Sigmoid colon (tissue), 7 donors: ENCODE measurements at regions of chr3 and their contacts with region 1.

Region 1: DNA sequence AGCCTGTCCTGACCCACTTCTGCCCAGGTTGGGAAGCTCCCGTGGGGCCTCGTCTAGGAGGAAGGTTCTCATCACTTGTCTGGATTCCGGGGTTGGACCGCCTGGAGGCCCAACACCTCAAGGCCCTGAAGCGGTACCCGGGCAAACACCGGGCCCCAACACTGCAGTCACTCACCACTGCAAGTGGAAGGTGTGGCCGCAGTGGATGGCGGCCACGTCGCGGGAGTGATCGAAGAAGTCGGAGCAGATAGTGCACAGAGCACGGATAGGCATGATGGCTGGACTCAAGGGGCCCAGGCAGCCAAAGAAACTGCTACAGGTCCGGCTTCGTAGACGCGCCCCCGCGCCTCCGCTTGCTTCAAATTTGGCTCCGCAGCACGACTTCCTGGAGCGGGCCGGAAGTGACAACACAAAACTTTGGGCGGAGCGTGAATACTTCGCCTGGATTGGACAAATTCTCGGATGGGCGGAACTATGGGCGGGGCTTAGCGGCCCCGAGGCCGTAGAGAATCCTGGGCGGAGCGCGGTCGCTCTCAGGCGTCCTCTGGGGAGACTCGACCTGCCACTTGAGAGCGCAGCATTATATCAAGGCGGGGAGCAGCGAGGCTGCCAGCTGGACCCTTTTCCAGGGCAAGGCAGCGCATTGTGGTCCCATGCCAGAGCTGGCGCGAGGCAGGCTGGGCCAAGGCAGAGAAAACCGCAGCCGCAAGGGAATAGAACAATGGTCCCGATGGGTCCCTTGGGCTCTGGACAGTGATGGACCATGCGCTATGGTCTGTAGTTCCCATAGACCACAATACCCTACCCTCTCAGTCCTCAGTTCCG is at the start of gene TRAIP:
- DNase-seq: peak; percentile 97
- H3K4me3 ChIP-seq: peak within 1 kb of the TSS; percentile 32 to 59 (median 54)
- H3K27ac ChIP-seq: peak within 1 kb of the TSS; percentile 78 to 88 (median 82)
- H3K4me1 ChIP-seq: peaks cover 0 to 16% (median 11%) of the 10 kb centered on the region in 4 donors
- H3K27me3 ChIP-seq: no peaks in the 10 kb centered on the region
- CTCF ChIP-seq: no peak
- EP300 ChIP-seq: no peak
- POLR2A ChIP-seq: peak in 1 of 2 donors; percentile 21
- total RNA-seq, gene TRAIP: 0.54 to 1.8 (median 1.6) TPM

Region 2: GRCh38 chr3:49929331-49930240 is 73.2 kb after region 1 on chr3 and contains the start of gene MON1A:
- intact Hi-C with region 1: loop called (anchors 5 kb)
- DNase-seq: peak; percentile 98
- H3K4me3 ChIP-seq: peak within 1 kb of the TSS; percentile 65 to 90 (median 76)
- H3K27ac ChIP-seq: peak within 1 kb of the TSS; percentile 84 to 88 (median 88)
- H3K4me1 ChIP-seq: peaks cover 0 to 23% (median 16%) of the 10 kb centered on the region in 4 donors
- H3K27me3 ChIP-seq: no peaks in the 10 kb centered on the region
- CTCF ChIP-seq: peak in 2 of 4 experiments; percentile 21
- EP300 ChIP-seq: no peak
- POLR2A ChIP-seq: peak in 1 of 2 donors; percentile 46
- total RNA-seq, gene MON1A: 10.4 to 16.3 (median 12.5) TPM